ENCODE measurements at regions of chr6 and their contacts with region 1.

Region 1: GRCh38 chr6:139291813-139292619 is at the start of gene TXLNB:
- DNase-seq: peak; percentile 54 to 90 (median 82)
- H3K4me3 ChIP-seq: peak within 1 kb of the TSS; percentile 42
- H3K4me3 Mint-ChIP-seq: peak within 1 kb of the TSS; percentile 73 to 91 (median 85)
- H3K27ac ChIP-seq: peak within 1 kb of the TSS; percentile 77
- H3K27ac Mint-ChIP-seq: peak within 1 kb of the TSS; percentile 84 to 98 (median 96)
- H3K4me1 ChIP-seq: peaks cover 43% of the 10 kb centered on the region
- H3K4me1 Mint-ChIP-seq: peaks cover 60 to 81% (median 69%) of the 10 kb centered on the region in 3 donors
- H3K27me3 ChIP-seq: no peaks in the 10 kb centered on the region
- H3K27me3 Mint-ChIP-seq: peaks cover 0 to 2% of the 10 kb centered on the region in 2 donors
- total RNA-seq, gene TXLNB: 0.13 to 0.47 TPM

Region 2: GRCh38 chr6:139124887-139125672 is 166.9 kb before region 1 on chr6:
- CTCF ChIA-PET with region 1: interaction called, 13 read pairs
- POLR2A ChIA-PET with region 1: interaction called, 3 read pairs
- DNase-seq: peak; percentile 48 to 88 (median 83)
- H3K4me3 ChIP-seq: peak overlapping the region; percentile 35
- H3K4me3 Mint-ChIP-seq: peak overlapping the region; percentile 42 to 80 (median 67)
- H3K27ac ChIP-seq: peak overlapping the region; percentile 10
- H3K27ac Mint-ChIP-seq: peak overlapping the region; percentile 83 to 97 (median 92)
- H3K4me1 ChIP-seq: peaks cover 49% of the 10 kb centered on the region
- H3K4me1 Mint-ChIP-seq: peaks cover 40 to 54% (median 49%) of the 10 kb centered on the region in 3 donors
- H3K27me3 ChIP-seq: no peaks in the 10 kb centered on the region
- H3K27me3 Mint-ChIP-seq: no peaks in the 10 kb centered on the region

Region 3: GRCh38 chr6:139204978-139205377 is 87.0 kb before region 1 on chr6:
- CTCF ChIA-PET with region 1: no interaction called
- POLR2A ChIA-PET with region 1: no interaction called
- DNase-seq: no peak
- H3K4me3 ChIP-seq: no peak overlapping the region
- H3K4me3 Mint-ChIP-seq: no peak overlapping the region
- H3K27ac ChIP-seq: no peak overlapping the region
- H3K27ac Mint-ChIP-seq: no peak overlapping the region
- H3K4me1 ChIP-seq: no peaks in the 10 kb centered on the region
- H3K4me1 Mint-ChIP-seq: peaks cover 6 to 10% (median 8%) of the 10 kb centered on the region in 3 donors
- H3K27me3 ChIP-seq: no peaks in the 10 kb centered on the region
- H3K27me3 Mint-ChIP-seq: peaks cover 0 to 6% of the 10 kb centered on the region in 2 donors

Region 4: GRCh38 chr6:139262519-139263300 is 29.3 kb before region 1 on chr6:
- CTCF ChIA-PET with region 1: interaction called, 11 read pairs
- POLR2A ChIA-PET with region 1: interaction called, 3 read pairs
- DNase-seq: peak in 2 of 5 donors; percentile 31 to 53
- H3K4me3 ChIP-seq: peak overlapping the region; percentile 32
- H3K4me3 Mint-ChIP-seq: peak overlapping the region; percentile 63 to 88 (median 80)
- H3K27ac ChIP-seq: no peak overlapping the region
- H3K27ac Mint-ChIP-seq: peak overlapping the region; percentile 8 to 90 (median 65)
- H3K4me1 ChIP-seq: peaks cover 15% of the 10 kb centered on the region
- H3K4me1 Mint-ChIP-seq: peaks cover 21 to 37% (median 32%) of the 10 kb centered on the region in 3 donors
- H3K27me3 ChIP-seq: no peaks in the 10 kb centered on the region
- H3K27me3 Mint-ChIP-seq: no peaks in the 10 kb centered on the region

Region 5: DNA sequence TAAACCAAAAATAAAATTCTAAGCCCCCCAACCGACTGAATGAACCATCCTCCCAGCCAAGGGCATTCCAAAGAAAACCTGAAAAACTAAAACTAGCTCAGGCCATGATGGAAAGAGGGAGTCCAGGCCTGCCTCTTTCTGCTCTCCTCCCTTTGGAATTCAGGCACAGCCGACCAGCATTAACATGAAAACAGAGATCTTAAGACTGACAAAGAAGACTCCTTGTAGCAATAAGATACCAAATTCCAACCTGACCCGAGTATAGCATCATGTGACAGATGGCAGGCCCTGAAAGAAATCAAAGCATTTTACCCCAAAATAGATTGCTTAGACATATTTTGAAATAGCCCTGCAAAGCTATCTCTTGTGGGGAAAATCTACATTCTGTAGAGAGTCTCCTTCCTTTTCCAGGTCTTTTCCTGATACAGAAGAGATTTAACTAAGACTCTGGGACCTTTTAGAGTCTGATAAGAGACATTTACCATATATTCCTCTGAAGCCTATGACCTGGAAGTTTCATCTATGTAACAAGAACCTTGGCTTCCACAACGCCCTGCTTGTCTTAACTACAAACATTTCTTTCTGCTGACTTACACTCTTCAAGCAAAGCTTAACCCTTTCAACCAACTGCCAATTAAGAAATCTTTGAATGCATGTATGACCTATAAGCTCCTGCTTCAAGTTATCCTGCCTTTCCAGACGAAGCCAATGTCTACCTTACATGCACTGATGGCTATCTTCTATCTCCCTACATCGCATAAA is 21.9 kb after region 1 on chr6:
- CTCF ChIA-PET with region 1: interaction called, 15 read pairs
- POLR2A ChIA-PET with region 1: interaction called, 6 read pairs
- DNase-seq: no peak
- H3K4me3 ChIP-seq: no peak overlapping the region
- H3K4me3 Mint-ChIP-seq: no peak overlapping the region
- H3K27ac ChIP-seq: no peak overlapping the region
- H3K27ac Mint-ChIP-seq: peak overlapping the region in 2 of 8 donors; percentile 54 to 57
- H3K4me1 ChIP-seq: no peaks in the 10 kb centered on the region
- H3K4me1 Mint-ChIP-seq: peaks cover 9 to 26% (median 18%) of the 10 kb centered on the region in 3 donors
- H3K27me3 ChIP-seq: no peaks in the 10 kb centered on the region
- H3K27me3 Mint-ChIP-seq: peaks cover 0 to 2% of the 10 kb centered on the region in 2 donors

Region 6: GRCh38 chr6:139323511-139324300 is 31.7 kb after region 1 on chr6:
- CTCF ChIA-PET with region 1: interaction called, 6 read pairs
- POLR2A ChIA-PET with region 1: interaction called, 35 read pairs
- DNase-seq: peak; percentile 63 to 90 (median 85)
- H3K4me3 ChIP-seq: peak overlapping the region; percentile 86
- H3K4me3 Mint-ChIP-seq: peak overlapping the region; percentile 69 to 94 (median 88)
- H3K27ac ChIP-seq: peak overlapping the region; percentile 94
- H3K27ac Mint-ChIP-seq: peak overlapping the region; percentile 95 to 99 (median 98)
- H3K4me1 ChIP-seq: peaks cover 32% of the 10 kb centered on the region
- H3K4me1 Mint-ChIP-seq: peaks cover 34 to 46% (median 44%) of the 10 kb centered on the region in 3 donors
- H3K27me3 ChIP-seq: no peaks in the 10 kb centered on the region
- H3K27me3 Mint-ChIP-seq: peaks cover 0 to 2% of the 10 kb centered on the region in 2 donors

Region 7: DNA sequence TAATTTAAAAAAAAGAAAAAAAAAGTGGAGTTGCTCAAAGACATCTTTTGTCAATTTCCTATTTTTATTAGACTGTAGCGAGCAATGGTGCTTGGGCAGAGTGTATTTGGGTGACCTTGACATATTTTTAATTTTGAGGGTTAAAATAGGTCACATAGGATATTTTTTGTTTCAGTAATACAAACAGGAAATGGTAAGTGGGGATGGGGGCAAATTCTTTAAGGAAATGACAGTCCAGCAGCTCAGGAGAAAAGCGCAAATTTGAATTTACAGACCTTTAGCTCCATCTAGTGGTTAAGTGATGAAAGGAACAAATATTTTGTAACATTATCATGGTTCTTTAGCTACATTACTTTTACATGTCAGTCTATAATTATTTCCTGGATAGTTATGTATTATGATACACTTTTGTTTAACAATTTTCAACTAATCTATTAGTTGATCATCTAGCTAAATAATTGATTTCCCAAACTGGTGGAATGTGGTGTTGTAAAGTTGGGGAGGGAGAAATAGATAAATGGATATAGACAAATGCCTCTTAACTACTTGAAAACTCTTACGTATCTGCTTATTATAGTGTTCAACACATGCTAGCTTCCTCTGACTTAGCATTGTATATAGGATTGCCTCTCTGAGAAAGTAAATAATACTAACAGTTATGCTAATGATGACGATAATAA is 72.4 kb after region 1 on chr6:
- CTCF ChIA-PET with region 1: interaction called, 19 read pairs
- POLR2A ChIA-PET with region 1: interaction called, 12 read pairs
- DNase-seq: peak in 2 of 5 donors; percentile 60 to 63
- H3K4me3 ChIP-seq: no peak overlapping the region
- H3K4me3 Mint-ChIP-seq: peak overlapping the region in 6 of 7 donors; percentile 4 to 43 (median 26)
- H3K27ac ChIP-seq: no peak overlapping the region
- H3K27ac Mint-ChIP-seq: peak overlapping the region in 4 of 8 donors; percentile 12 to 77 (median 62)
- H3K4me1 ChIP-seq: peaks cover 14% of the 10 kb centered on the region
- H3K4me1 Mint-ChIP-seq: peaks cover 23 to 61% (median 45%) of the 10 kb centered on the region in 3 donors
- H3K27me3 ChIP-seq: no peaks in the 10 kb centered on the region
- H3K27me3 Mint-ChIP-seq: no peaks in the 10 kb centered on the region